Activated CD4-positive, alpha-beta T cell treated with anti-CD3 and anti-CD28 coated beads, Interleukin-2, amount 10 ng/mL, durations not matched to agents 24 days and 14 days (primary cell): ENCODE measurements at regions of chr22 and their contacts with region 1.

Region 1: DNA sequence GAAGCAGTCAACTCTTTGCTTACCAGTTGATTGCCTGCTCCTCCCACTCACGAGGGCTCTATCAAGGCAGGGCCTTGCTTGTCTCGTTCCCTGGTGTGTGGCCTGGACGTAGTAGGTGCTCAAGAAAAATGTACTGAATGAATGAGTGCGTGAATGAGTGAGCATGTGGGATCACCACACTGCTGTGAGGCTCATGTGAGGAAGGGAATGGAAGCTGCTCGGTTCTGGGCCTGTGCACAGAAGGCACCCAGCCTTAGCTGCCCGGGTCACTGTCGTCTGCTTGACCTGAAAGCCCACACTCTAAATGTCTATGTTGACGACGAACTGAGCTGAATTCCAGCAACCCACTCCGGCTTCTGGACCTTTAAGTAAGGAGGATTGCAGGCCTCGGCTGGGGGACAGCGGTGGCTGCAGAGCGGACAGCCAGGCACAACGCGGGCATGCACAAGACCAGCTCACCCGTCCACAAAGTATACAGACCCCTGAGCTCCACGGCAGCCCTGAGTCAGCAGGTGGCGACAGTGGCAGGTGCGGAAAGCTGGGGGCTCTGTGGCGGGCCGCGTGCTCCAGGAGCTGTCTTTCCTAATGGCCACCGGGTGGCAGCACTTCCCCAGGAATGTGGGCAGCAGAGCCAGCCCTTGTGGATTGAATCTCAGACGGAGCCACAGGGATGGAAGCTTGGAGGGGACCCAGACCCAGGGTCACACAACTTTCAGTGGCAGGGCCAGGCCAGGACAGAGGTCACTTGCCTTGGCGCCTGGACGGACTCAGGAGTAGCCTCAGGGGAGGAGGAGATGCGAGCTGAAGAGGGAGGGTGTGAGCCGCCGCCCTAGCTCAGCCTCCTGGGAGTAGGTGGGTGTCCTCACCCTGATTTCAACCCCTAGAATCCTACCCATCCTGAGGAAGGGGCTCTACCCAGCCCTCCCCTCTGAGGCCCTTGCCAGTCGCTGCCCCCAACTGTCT is 5.0 kb upstream of the PICK1 start:
- DNase-seq: peak; percentile 91
- H3K4me3 Mint-ChIP-seq: no peak overlapping the region
- H3K27ac Mint-ChIP-seq: no peak overlapping the region
- H3K4me1 Mint-ChIP-seq: peaks cover 9% of the 10 kb centered on the region
- H3K27me3 Mint-ChIP-seq: peaks cover 7% of the 10 kb centered on the region

Region 2: GRCh38 chr22:38104084-38104483 is 51.9 kb after region 1 on chr22:
- intact Hi-C with region 1: loop called (anchors 5 kb)
- DNase-seq: no peak
- H3K4me3 Mint-ChIP-seq: no peak overlapping the region
- H3K27ac Mint-ChIP-seq: no peak overlapping the region
- H3K4me1 Mint-ChIP-seq: peaks cover 6% of the 10 kb centered on the region
- H3K27me3 Mint-ChIP-seq: no peaks in the 10 kb centered on the region

Region 3: GRCh38 chr22:38353142-38353629 is 301.0 kb after region 1 on chr22:
- intact Hi-C with region 1: loop called (anchors 5 kb)
- DNase-seq: peak; percentile 93
- H3K4me3 Mint-ChIP-seq: no peak overlapping the region
- H3K27ac Mint-ChIP-seq: no peak overlapping the region
- H3K4me1 Mint-ChIP-seq: no peaks in the 10 kb centered on the region
- H3K27me3 Mint-ChIP-seq: no peaks in the 10 kb centered on the region